ENCODE measurements at regions of chr2 and their contacts with region 1.

Region 1: DNA sequence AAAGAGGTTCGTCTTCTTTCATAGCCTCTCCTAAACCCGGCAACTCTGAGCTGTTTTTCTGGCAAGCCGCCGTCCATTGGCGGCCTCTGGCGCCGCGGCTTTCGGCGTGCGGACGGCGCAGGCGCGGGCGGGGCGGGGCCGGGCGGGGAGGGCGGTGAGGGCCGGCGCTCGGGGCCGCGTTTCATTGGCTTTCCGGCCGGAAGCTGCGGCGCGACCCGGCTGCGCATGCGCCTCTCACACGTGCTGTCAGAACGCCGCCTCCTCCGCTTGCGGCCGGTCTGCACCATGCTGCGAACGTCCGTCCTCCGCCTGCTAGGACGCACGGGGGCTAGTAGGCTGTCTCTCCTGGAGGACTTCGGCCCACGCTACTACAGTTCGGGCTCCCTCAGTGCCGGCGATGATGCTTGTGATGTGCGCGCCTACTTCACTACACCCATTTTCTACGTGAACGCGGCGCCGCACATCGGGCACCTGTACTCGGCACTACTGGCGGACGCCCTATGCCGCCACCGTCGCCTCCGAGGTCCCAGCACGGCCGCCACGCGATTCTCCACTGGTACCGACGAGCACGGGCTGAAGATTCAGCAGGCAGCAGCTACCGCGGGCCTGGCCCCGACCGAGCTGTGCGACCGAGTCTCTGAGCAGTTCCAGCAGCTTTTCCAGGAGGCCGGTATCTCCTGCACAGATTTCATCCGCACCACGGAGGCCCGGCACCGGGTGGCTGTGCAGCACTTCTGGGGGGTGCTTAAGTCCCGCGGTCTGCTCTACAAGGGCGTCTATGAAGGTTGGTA is at the start of gene MARS2:
- DNase-seq: peak; percentile 84 to 98 (median 92)
- ATAC-seq: peak; percentile 80
- H3K4me3 ChIP-seq: peak within 1 kb of the TSS; percentile 99
- H3K4me3 Mint-ChIP-seq: peak within 1 kb of the TSS; percentile 86
- H3K27ac ChIP-seq: peak within 1 kb of the TSS; percentile 86 to 88
- H3K27ac Mint-ChIP-seq: peak within 1 kb of the TSS; percentile 90
- H3K4me1 ChIP-seq: peaks cover 34% of the 10 kb centered on the region
- H3K4me1 Mint-ChIP-seq: peaks cover 49% of the 10 kb centered on the region
- H3K27me3 ChIP-seq: peaks cover 0 to 6% of the 10 kb centered on the region in 2 experiments
- H3K27me3 Mint-ChIP-seq: no peaks in the 10 kb centered on the region
- CTCF ChIP-seq: no peak
- total RNA-seq, gene MARS2: 7.2 to 7.8 TPM

Region 2: DNA sequence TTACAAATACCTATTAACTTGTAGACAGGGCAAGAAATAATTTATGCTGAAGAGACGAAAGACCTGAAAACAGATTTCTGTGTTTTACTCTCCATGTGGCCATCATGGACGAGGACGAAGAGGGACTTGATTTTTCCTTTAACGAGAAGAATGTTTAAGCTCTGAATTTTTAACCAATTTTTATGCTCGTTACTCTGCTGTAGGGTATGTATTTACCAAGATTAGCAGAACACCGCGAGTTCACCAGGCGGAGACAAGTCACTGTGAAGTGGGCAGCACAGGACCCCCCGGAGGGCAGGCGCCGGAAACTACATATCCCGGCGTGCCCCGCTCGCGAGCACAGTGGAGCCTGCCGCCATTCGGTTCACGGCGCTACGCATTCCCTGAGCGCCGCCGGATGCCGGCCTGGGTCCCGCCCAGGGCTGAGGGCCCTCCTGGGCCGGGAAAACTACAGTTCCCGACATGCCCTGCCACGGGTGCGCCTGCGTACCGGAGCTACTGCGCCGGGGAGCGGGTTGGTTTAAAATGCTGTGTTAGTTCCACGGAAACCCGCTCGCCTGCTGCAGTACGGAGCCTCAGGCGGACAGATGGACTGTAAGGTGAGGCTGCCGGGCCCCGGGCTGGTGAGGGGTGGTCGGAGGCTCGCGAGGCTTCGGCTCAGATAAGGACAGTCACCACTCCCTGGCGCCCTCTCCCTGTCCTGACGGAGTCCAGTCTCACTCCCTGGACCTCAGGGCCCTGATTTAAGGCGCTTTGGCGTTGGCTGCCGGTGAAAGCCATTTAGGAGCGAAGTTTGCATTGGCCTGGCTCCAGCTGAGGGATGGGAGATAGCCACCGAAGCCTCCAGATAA is 1065.9 kb before region 1 on chr2 and contains the start of gene CCDC150:
- CTCF ChIA-PET with region 1: no interaction called
- POLR2A ChIA-PET with region 1: no interaction called
- intact Hi-C with region 1: loop called in 1 of 2 experiments (anchors 5 kb)
- DNase-seq: peak; percentile 88 to 96 (median 92)
- ATAC-seq: peak; percentile 100
- H3K4me3 ChIP-seq: peak within 1 kb of the TSS; percentile 68
- H3K4me3 Mint-ChIP-seq: peak within 1 kb of the TSS; percentile 91
- H3K27ac ChIP-seq: no peak within 1 kb of the TSS
- H3K27ac Mint-ChIP-seq: peak within 1 kb of the TSS; percentile 40
- H3K4me1 ChIP-seq: peaks cover 12% of the 10 kb centered on the region
- H3K4me1 Mint-ChIP-seq: peaks cover 17% of the 10 kb centered on the region
- H3K27me3 ChIP-seq: no peaks in the 10 kb centered on the region
- H3K27me3 Mint-ChIP-seq: no peaks in the 10 kb centered on the region
- CTCF ChIP-seq: no peak
- total RNA-seq, gene CCDC150: 0.22 to 0.75 TPM

Region 3: GRCh38 chr2:196939187-196939770 is 766.0 kb before region 1 on chr2:
- CTCF ChIA-PET with region 1: no interaction called
- POLR2A ChIA-PET with region 1: no interaction called
- intact Hi-C with region 1: loop called in 1 of 2 experiments (anchors 10 kb)
- DNase-seq: no peak
- ATAC-seq: no peak
- H3K4me3 ChIP-seq: no peak overlapping the region
- H3K4me3 Mint-ChIP-seq: no peak overlapping the region
- H3K27ac ChIP-seq: no peak overlapping the region
- H3K27ac Mint-ChIP-seq: no peak overlapping the region
- H3K4me1 ChIP-seq: no peaks in the 10 kb centered on the region
- H3K4me1 Mint-ChIP-seq: peaks cover 5% of the 10 kb centered on the region
- H3K27me3 ChIP-seq: no peaks in the 10 kb centered on the region
- H3K27me3 Mint-ChIP-seq: no peaks in the 10 kb centered on the region
- CTCF ChIP-seq: no peak

Region 4: GRCh38 chr2:197453161-197453914 is 252.0 kb before region 1 on chr2 and contains the start of gene COQ10B:
- CTCF ChIA-PET with region 1: no interaction called
- POLR2A ChIA-PET with region 1: interaction called, 14 read pairs
- intact Hi-C with region 1: loop called in 1 of 2 experiments (anchors 2 kb)
- DNase-seq: peak; percentile 94 to 100 (median 97)
- ATAC-seq: peak; percentile 85
- H3K4me3 ChIP-seq: peak within 1 kb of the TSS; percentile 67
- H3K4me3 Mint-ChIP-seq: peak within 1 kb of the TSS; percentile 99
- H3K27ac ChIP-seq: peak within 1 kb of the TSS; percentile 98 to 100
- H3K27ac Mint-ChIP-seq: peak within 1 kb of the TSS; percentile 100
- H3K4me1 ChIP-seq: peaks cover 29% of the 10 kb centered on the region
- H3K4me1 Mint-ChIP-seq: peaks cover 52% of the 10 kb centered on the region
- H3K27me3 ChIP-seq: no peaks in the 10 kb centered on the region
- H3K27me3 Mint-ChIP-seq: no peaks in the 10 kb centered on the region
- CTCF ChIP-seq: peak; percentile 47
- total RNA-seq, gene COQ10B: 53.4 to 55.3 TPM

Region 5: GRCh38 chr2:197515739-197516392 is 189.4 kb before region 1 on chr2 and contains the start of gene MOB4:
- CTCF ChIA-PET with region 1: no interaction called
- POLR2A ChIA-PET with region 1: interaction called, 24 read pairs
- intact Hi-C with region 1: loop called in 1 of 2 experiments (anchors 5 kb)
- DNase-seq: peak; percentile 88 to 97 (median 92)
- ATAC-seq: peak; percentile 89
- H3K4me3 ChIP-seq: peak within 1 kb of the TSS; percentile 77
- H3K4me3 Mint-ChIP-seq: peak within 1 kb of the TSS; percentile 98
- H3K27ac ChIP-seq: peak within 1 kb of the TSS; percentile 86 to 91
- H3K27ac Mint-ChIP-seq: peak within 1 kb of the TSS; percentile 89
- H3K4me1 ChIP-seq: peaks cover 22% of the 10 kb centered on the region
- H3K4me1 Mint-ChIP-seq: peaks cover 46% of the 10 kb centered on the region
- H3K27me3 ChIP-seq: no peaks in the 10 kb centered on the region
- H3K27me3 Mint-ChIP-seq: no peaks in the 10 kb centered on the region
- CTCF ChIP-seq: no peak
- total RNA-seq, gene MOB4: 28.4 to 29.8 TPM

Region 6: GRCh38 chr2:197908990-197909776 is 203.9 kb after region 1 on chr2:
- CTCF ChIA-PET with region 1: no interaction called
- POLR2A ChIA-PET with region 1: no interaction called
- intact Hi-C with region 1: no loop called
- DNase-seq: no peak
- ATAC-seq: no peak
- H3K4me3 ChIP-seq: no peak overlapping the region
- H3K4me3 Mint-ChIP-seq: no peak overlapping the region
- H3K27ac ChIP-seq: no peak overlapping the region
- H3K27ac Mint-ChIP-seq: no peak overlapping the region
- H3K4me1 ChIP-seq: peaks cover 4% of the 10 kb centered on the region
- H3K4me1 Mint-ChIP-seq: peaks cover 74% of the 10 kb centered on the region
- H3K27me3 ChIP-seq: no peaks in the 10 kb centered on the region
- H3K27me3 Mint-ChIP-seq: no peaks in the 10 kb centered on the region
- CTCF ChIP-seq: no peak

Region 7: DNA sequence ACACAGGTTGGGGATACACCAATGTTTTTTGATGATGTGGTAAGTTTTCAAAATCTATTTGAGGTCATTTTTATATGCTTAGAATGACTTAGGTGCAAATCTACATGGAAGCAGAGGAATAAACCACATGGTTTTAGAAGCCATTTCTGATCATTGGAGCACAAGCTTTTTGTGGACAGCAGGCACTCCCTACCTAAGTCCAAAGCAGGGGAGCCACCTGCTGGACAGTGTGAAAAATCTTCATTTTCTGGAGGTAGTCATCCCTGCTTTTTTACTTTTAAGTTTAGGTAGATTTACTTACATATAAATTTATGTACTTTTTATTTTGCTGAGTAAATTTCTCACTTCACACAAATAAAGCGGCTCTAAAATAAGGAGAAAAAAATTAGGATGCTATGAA is 422.3 kb after region 1 on chr2:
- CTCF ChIA-PET with region 1: no interaction called
- POLR2A ChIA-PET with region 1: interaction called, 3 read pairs
- intact Hi-C with region 1: loop called (anchors 2 to 5 kb)
- DNase-seq: peak; percentile 12 to 76 (median 40)
- ATAC-seq: peak; percentile 77
- H3K4me3 ChIP-seq: no peak overlapping the region
- H3K4me3 Mint-ChIP-seq: no peak overlapping the region
- H3K27ac ChIP-seq: no peak overlapping the region
- H3K27ac Mint-ChIP-seq: no peak overlapping the region
- H3K4me1 ChIP-seq: no peaks in the 10 kb centered on the region
- H3K4me1 Mint-ChIP-seq: peaks cover 6% of the 10 kb centered on the region
- H3K27me3 ChIP-seq: no peaks in the 10 kb centered on the region
- H3K27me3 Mint-ChIP-seq: no peaks in the 10 kb centered on the region
- CTCF ChIP-seq: peak; percentile 75

Region 8: DNA sequence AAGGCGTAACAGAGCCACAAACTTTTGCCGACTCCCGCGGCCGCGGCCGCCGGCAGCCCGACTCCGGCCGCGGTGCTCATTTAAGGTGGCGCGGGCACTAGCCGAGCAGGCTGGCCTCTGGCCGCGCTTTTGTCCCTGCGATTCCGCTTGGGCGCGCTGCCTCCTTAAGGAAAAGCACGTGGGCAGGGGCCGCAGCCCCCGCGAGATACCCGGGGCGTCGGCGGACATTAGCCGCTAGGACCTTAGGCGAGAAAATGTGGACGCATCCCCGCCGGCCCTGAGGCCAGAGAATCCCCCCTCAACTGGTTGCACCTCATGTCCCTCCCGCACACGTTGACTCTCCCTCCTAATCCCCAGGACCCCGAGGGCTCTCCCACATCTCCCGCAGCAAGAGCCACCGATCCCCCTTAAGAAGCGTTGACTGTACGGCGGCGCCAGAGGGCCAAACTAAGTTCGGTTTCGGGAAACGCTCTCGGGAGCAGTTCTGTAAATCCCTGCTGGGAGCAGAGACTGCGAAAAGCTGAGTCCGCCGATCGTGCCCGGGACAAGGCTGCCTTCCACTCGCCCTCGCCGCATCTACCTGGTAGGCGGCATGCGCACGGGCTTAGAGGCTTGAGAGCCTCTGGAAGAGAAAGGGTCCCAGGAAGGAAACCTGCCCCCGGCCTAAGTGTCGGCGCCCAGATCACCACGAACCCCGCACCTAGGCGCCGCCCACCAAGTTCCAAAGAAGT is 1754.1 kb after region 1 on chr2:
- CTCF ChIA-PET with region 1: no interaction called
- POLR2A ChIA-PET with region 1: no interaction called
- intact Hi-C with region 1: loop called in 1 of 2 experiments (anchors 10 kb)
- DNase-seq: peak; percentile 34 to 77 (median 52)
- ATAC-seq: peak; percentile 31
- H3K4me3 ChIP-seq: peak overlapping the region; percentile 93
- H3K4me3 Mint-ChIP-seq: peak overlapping the region; percentile 94
- H3K27ac ChIP-seq: no peak overlapping the region
- H3K27ac Mint-ChIP-seq: peak overlapping the region; percentile 52
- H3K4me1 ChIP-seq: peaks cover 65% of the 10 kb centered on the region
- H3K4me1 Mint-ChIP-seq: peaks cover 31% of the 10 kb centered on the region
- H3K27me3 ChIP-seq: peaks cover 61 to 79% of the 10 kb centered on the region in 2 experiments
- H3K27me3 Mint-ChIP-seq: peaks cover 81% of the 10 kb centered on the region
- CTCF ChIP-seq: no peak